CD4-positive, alpha-beta memory T cell (primary cell): ENCODE measurements at regions of chr5 and their contacts with region 1.

Region 1: DNA sequence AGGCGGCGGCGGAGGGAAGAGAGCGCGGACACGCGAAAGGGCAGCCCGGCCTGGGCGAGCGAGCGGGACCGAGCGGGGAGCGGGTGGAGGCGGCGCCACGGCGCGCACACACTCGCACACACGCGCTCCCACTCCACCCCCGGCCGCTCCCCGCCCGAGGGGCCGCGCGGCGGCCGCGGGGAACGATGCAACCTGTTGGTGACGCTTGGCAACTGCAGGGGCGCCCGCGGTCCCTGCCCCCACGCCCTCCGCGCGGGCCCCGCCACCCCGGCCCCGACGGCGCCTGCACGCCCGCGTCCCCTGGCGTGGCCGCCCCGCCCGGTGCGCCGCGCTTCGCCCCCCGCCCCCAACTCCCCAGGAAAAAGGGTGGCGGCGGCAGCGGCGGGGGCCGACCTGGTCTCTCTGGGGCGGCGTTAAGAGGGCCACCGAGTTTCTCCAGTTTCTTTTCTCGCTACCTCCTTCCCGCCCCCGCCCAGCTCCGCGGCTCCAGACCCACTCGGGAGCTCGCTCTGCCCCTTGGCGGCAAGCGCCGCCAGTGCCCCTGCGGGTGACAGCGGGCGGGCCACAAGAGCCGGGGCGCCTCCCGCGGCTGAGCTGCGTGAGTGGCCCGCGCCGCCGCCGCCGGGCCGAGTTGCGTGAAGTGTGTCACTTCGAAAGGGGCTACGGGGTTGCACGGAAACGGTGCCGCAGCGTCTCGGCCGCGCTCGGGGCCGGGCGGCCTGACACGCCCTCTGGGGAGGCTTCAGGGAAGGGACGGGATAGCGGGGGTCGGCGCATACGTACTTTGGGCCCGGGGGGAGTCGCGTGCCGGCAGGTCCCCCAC is at the start of gene NR3C1:
- DNase-seq: peak; percentile 89 to 92 (median 91)
- H3K4me3 ChIP-seq: peak within 1 kb of the TSS; percentile 77 to 93
- H3K4me3 Mint-ChIP-seq: peak within 1 kb of the TSS; percentile 92 to 97 (median 94)
- H3K27ac ChIP-seq: peak within 1 kb of the TSS; percentile 90
- H3K27ac Mint-ChIP-seq: peak within 1 kb of the TSS; percentile 95 to 100 (median 99)
- H3K4me1 ChIP-seq: peaks cover 39% of the 10 kb centered on the region
- H3K4me1 Mint-ChIP-seq: peaks cover 32 to 50% (median 40%) of the 10 kb centered on the region in 4 donors
- H3K27me3 ChIP-seq: no peaks in the 10 kb centered on the region
- H3K27me3 Mint-ChIP-seq: no peaks in the 10 kb centered on the region
- total RNA-seq, gene NR3C1: 161 to 164 TPM

Region 2: GRCh38 chr5:142769741-142770631 is 633.8 kb before region 1 on chr5 and contains the start of gene ARHGAP26:
- CTCF ChIA-PET with region 1: interaction called, 3 read pairs
- POLR2A ChIA-PET with region 1: interaction called, 14 read pairs
- intact Hi-C with region 1: loop called (anchors 1 kb)
- DNase-seq: peak; percentile 87 to 91 (median 88)
- H3K4me3 ChIP-seq: peak within 1 kb of the TSS; percentile 74 to 89
- H3K4me3 Mint-ChIP-seq: peak within 1 kb of the TSS; percentile 94 to 98 (median 96)
- H3K27ac ChIP-seq: peak within 1 kb of the TSS; percentile 53
- H3K27ac Mint-ChIP-seq: peak within 1 kb of the TSS; percentile 85 to 97 (median 94)
- H3K4me1 ChIP-seq: peaks cover 14% of the 10 kb centered on the region
- H3K4me1 Mint-ChIP-seq: peaks cover 18 to 38% (median 26%) of the 10 kb centered on the region in 4 donors
- H3K27me3 ChIP-seq: no peaks in the 10 kb centered on the region
- H3K27me3 Mint-ChIP-seq: no peaks in the 10 kb centered on the region
- total RNA-seq, gene ARHGAP26: 22.6 to 22.7 TPM

Region 3: DNA sequence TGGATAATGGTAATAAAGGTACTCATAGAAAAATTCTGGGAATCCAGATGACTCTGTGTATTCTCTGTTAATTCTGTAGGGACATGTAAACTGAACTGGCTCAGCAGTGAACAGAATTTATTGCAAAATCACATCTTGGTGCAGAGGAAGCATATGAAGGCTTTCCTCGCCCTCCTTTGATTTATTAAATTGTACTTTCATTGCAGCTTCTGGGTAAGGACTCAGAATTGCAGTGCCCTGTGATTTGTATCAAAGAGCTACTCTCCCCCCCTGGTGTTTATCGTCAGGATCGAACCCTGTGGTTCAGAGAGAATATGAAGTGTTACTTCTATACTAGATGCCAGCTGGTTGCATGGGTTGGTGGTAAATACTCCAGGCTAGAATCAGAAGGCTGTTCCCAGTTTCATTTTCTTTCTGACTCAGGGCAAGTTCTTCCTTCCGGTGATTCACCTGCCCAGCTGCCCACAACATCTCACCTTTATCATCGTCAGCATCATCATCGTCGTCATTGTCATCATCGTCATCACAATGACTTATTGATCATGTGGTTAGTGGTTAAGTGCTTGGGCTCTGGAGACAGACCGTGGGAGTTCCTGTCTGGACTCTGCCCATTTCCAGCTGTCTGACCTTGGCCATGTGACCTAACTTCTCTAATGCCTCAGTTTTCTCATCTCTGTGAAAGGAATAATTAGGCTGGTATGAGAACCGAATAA is 394.8 kb before region 1 on chr5:
- CTCF ChIA-PET with region 1: interaction called, 37 read pairs
- POLR2A ChIA-PET with region 1: interaction called, 118 read pairs
- intact Hi-C with region 1: no loop called
- DNase-seq: peak; percentile 83 to 96 (median 87)
- H3K4me3 ChIP-seq: no peak overlapping the region
- H3K4me3 Mint-ChIP-seq: peak overlapping the region; percentile 23 to 71 (median 68)
- H3K27ac ChIP-seq: peak overlapping the region; percentile 63
- H3K27ac Mint-ChIP-seq: peak overlapping the region; percentile 84 to 97 (median 94)
- H3K4me1 ChIP-seq: peaks cover 49% of the 10 kb centered on the region
- H3K4me1 Mint-ChIP-seq: peaks cover 31 to 56% (median 40%) of the 10 kb centered on the region in 4 donors
- H3K27me3 ChIP-seq: no peaks in the 10 kb centered on the region
- H3K27me3 Mint-ChIP-seq: no peaks in the 10 kb centered on the region

Region 4: DNA sequence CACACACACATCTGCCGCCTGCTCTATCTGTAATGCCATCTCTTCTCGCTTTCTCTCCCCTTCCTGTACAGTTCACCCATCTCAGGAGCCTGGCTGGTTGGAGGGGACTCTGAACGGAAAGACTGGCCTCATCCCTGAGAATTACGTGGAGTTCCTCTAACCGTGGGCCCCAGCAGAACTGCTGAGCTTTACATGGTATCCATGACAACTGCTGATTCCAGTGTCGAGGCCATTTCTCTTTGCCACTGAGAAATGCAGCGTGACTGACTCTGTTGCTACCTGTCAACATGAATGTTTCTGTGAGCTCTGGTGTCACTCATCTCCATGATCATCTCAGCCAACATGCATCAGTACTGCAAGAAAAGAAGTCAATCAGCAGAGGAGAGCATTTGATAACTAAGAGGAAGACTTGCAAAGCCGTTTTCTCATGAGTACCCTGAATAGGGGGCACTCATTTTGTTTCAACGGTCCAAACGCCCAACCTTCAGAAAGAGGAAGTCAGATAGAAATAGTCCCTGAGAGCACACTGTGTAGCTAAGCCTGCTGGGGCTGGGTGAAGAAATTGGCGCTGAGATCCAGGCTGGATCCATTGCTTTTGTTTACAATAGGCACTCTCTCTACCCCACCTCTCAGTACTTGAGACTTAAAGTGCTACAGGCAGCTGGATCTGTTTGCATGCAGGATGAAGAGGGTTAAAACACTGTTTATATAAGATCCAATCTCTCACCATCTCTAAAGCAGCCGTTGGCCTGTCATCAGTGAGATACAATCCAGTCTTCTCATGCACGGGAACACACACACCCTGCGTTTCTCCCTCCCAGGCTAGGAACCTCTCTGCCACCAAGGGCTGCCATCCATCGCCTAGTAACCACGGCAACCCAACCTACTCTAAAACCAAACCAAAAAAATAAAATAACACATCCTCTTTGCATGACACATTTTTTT is 181.2 kb before region 1 on chr5:
- CTCF ChIA-PET with region 1: interaction called, 3 read pairs
- POLR2A ChIA-PET with region 1: interaction called, 43 read pairs
- intact Hi-C with region 1: loop called (anchors 2 kb)
- DNase-seq: peak; percentile 81 to 95 (median 85)
- H3K4me3 ChIP-seq: peak overlapping the region in 1 of 2 donors; percentile 42
- H3K4me3 Mint-ChIP-seq: peak overlapping the region; percentile 41 to 85 (median 74)
- H3K27ac ChIP-seq: peak overlapping the region; percentile 91
- H3K27ac Mint-ChIP-seq: peak overlapping the region; percentile 95 to 100 (median 98)
- H3K4me1 ChIP-seq: peaks cover 56% of the 10 kb centered on the region
- H3K4me1 Mint-ChIP-seq: peaks cover 34 to 65% (median 50%) of the 10 kb centered on the region in 4 donors
- H3K27me3 ChIP-seq: no peaks in the 10 kb centered on the region
- H3K27me3 Mint-ChIP-seq: peaks cover 0 to 1% of the 10 kb centered on the region in 2 donors

Region 5: GRCh38 chr5:143386725-143387124 is 17.1 kb before region 1 on chr5:
- CTCF ChIA-PET with region 1: no interaction called
- POLR2A ChIA-PET with region 1: interaction called, 7 read pairs
- intact Hi-C with region 1: loop called (anchors 2 kb)
- DNase-seq: peak in 1 of 5 donors; percentile 11
- H3K4me3 ChIP-seq: no peak overlapping the region
- H3K4me3 Mint-ChIP-seq: peak overlapping the region in 2 of 8 donors; percentile 10 to 15
- H3K27ac ChIP-seq: no peak overlapping the region
- H3K27ac Mint-ChIP-seq: no peak overlapping the region
- H3K4me1 ChIP-seq: peaks cover 80% of the 10 kb centered on the region
- H3K4me1 Mint-ChIP-seq: peaks cover 63 to 97% (median 78%) of the 10 kb centered on the region in 4 donors
- H3K27me3 ChIP-seq: no peaks in the 10 kb centered on the region
- H3K27me3 Mint-ChIP-seq: no peaks in the 10 kb centered on the region

Region 6: GRCh38 chr5:143435210-143435657 is 31.4 kb after region 1 on chr5:
- CTCF ChIA-PET with region 1: interaction called, 64 read pairs
- POLR2A ChIA-PET with region 1: interaction called, 250 read pairs
- intact Hi-C with region 1: loop called (anchors 1 kb)
- DNase-seq: peak; percentile 61 to 72 (median 67)
- H3K4me3 ChIP-seq: peak overlapping the region; percentile 32 to 54
- H3K4me3 Mint-ChIP-seq: peak overlapping the region; percentile 93 to 98 (median 94)
- H3K27ac ChIP-seq: peak overlapping the region; percentile 55
- H3K27ac Mint-ChIP-seq: peak overlapping the region; percentile 92 to 100 (median 99)
- H3K4me1 ChIP-seq: peaks cover 51% of the 10 kb centered on the region
- H3K4me1 Mint-ChIP-seq: peaks cover 53 to 73% (median 65%) of the 10 kb centered on the region in 4 donors
- H3K27me3 ChIP-seq: no peaks in the 10 kb centered on the region
- H3K27me3 Mint-ChIP-seq: no peaks in the 10 kb centered on the region

Region 7: GRCh38 chr5:143564417-143564816 is 160.6 kb after region 1 on chr5:
- CTCF ChIA-PET with region 1: no interaction called
- POLR2A ChIA-PET with region 1: no interaction called
- intact Hi-C with region 1: no loop called
- DNase-seq: no peak
- H3K4me3 ChIP-seq: no peak overlapping the region
- H3K4me3 Mint-ChIP-seq: no peak overlapping the region
- H3K27ac ChIP-seq: no peak overlapping the region
- H3K27ac Mint-ChIP-seq: no peak overlapping the region
- H3K4me1 ChIP-seq: no peaks in the 10 kb centered on the region
- H3K4me1 Mint-ChIP-seq: no peaks in the 10 kb centered on the region
- H3K27me3 ChIP-seq: no peaks in the 10 kb centered on the region
- H3K27me3 Mint-ChIP-seq: no peaks in the 10 kb centered on the region

Region 8: GRCh38 chr5:143824851-143825720 is 421.3 kb after region 1 on chr5:
- CTCF ChIA-PET with region 1: interaction called, 5 read pairs
- POLR2A ChIA-PET with region 1: interaction called, 9 read pairs
- intact Hi-C with region 1: loop called (anchors 1 kb)
- DNase-seq: peak; percentile 72 to 80 (median 75)
- H3K4me3 ChIP-seq: no peak overlapping the region
- H3K4me3 Mint-ChIP-seq: no peak overlapping the region
- H3K27ac ChIP-seq: no peak overlapping the region
- H3K27ac Mint-ChIP-seq: no peak overlapping the region
- H3K4me1 ChIP-seq: peaks cover 27% of the 10 kb centered on the region
- H3K4me1 Mint-ChIP-seq: peaks cover 16 to 19% (median 17%) of the 10 kb centered on the region in 4 donors
- H3K27me3 ChIP-seq: no peaks in the 10 kb centered on the region
- H3K27me3 Mint-ChIP-seq: peaks cover 0 to 2% of the 10 kb centered on the region in 2 donors